CD8-positive, alpha-beta T cell (primary cell): ENCODE measurements at regions of chr21 and their contacts with region 1.

Region 1: GRCh38 chr21:39397646-39398385 is 47.8 kb downstream of the LCA5L start:
- DNase-seq: no peak
- ATAC-seq: no peak
- H3K4me3 ChIP-seq: no peak overlapping the region
- H3K4me3 Mint-ChIP-seq: no peak overlapping the region
- H3K27ac ChIP-seq: no peak overlapping the region
- H3K27ac Mint-ChIP-seq: no peak overlapping the region
- H3K4me1 ChIP-seq: no peaks in the 10 kb centered on the region
- H3K4me1 Mint-ChIP-seq: no peaks in the 10 kb centered on the region
- H3K27me3 ChIP-seq: no peaks in the 10 kb centered on the region
- H3K27me3 Mint-ChIP-seq: no peaks in the 10 kb centered on the region
- CTCF ChIP-seq: no peak

Region 2: GRCh38 chr21:39434950-39435349 is 37.1 kb after region 1 on chr21:
- CTCF ChIA-PET with region 1: no interaction called
- POLR2A ChIA-PET with region 1: no interaction called
- intact Hi-C with region 1: loop called in 1 of 2 experiments (anchors 5 kb)
- DNase-seq: no peak
- ATAC-seq: no peak
- H3K4me3 ChIP-seq: no peak overlapping the region
- H3K4me3 Mint-ChIP-seq: no peak overlapping the region
- H3K27ac ChIP-seq: no peak overlapping the region
- H3K27ac Mint-ChIP-seq: no peak overlapping the region
- H3K4me1 ChIP-seq: no peaks in the 10 kb centered on the region
- H3K4me1 Mint-ChIP-seq: no peaks in the 10 kb centered on the region
- H3K27me3 ChIP-seq: peaks cover 0 to 6% of the 10 kb centered on the region in 2 experiments
- H3K27me3 Mint-ChIP-seq: peaks cover 24% of the 10 kb centered on the region
- CTCF ChIP-seq: no peak

Region 3: GRCh38 chr21:39489380-39489924 is 91.6 kb after region 1 on chr21:
- CTCF ChIA-PET with region 1: no interaction called
- POLR2A ChIA-PET with region 1: no interaction called
- intact Hi-C with region 1: no loop called
- DNase-seq: no peak
- ATAC-seq: no peak
- H3K4me3 ChIP-seq: no peak overlapping the region
- H3K4me3 Mint-ChIP-seq: no peak overlapping the region
- H3K27ac ChIP-seq: no peak overlapping the region
- H3K27ac Mint-ChIP-seq: no peak overlapping the region
- H3K4me1 ChIP-seq: no peaks in the 10 kb centered on the region
- H3K4me1 Mint-ChIP-seq: no peaks in the 10 kb centered on the region
- H3K27me3 ChIP-seq: no peaks in the 10 kb centered on the region
- H3K27me3 Mint-ChIP-seq: no peaks in the 10 kb centered on the region
- CTCF ChIP-seq: no peak